HEK293 (cell line): ENCODE measurements at regions of chr16 and their contacts with region 1.

Region 1: DNA sequence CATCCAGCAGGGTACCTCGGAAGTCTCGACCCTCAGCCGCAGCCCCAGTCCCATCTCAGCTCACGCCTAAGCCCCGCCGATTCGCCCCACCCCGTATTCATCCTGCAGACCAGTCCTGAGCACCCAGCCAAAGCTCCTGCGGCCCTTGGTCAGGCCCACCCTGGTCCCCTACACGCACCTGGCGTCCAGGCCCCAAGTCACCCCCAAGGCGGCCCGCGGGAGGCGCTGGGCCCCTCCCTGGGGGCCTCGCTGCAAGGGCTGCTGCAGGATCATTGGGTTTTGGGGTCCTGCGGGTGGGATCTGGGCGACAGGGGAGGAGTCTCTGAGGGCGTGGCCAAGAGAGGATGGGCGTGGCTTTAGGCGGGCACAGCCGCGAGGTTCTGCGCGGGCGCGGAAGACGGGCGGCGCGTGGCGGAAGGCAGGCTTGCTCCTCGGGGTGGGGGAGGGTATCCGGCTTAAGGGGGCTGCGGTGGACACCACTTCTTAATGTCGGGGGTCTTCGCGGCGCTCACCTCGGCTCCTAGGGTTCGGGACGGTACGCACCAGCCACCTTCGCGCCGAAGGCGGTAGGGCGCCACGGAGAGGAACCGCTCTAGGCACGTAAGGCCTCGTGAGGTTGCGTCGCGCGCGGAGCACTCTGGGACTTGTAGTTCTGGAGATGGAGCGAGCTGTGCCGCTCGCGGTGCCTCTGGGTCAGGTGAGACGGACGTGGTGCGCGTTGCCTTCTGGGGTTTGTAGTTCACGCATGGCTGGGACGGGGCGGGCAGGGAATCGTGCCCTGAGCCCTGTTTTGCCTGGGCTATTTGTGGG is at the starts of genes HCFC1R1 and THOC6:
- H3K4me3 ChIP-seq: peak within 1 kb of the TSS; percentile 72
- H3K27ac ChIP-seq: peak within 1 kb of the TSS; percentile 85
- H3K4me1 ChIP-seq: peaks cover 27% of the 10 kb centered on the region
- CTCF ChIP-seq: no peak; the same call in 1 of the 2 replicates

Region 2: DNA sequence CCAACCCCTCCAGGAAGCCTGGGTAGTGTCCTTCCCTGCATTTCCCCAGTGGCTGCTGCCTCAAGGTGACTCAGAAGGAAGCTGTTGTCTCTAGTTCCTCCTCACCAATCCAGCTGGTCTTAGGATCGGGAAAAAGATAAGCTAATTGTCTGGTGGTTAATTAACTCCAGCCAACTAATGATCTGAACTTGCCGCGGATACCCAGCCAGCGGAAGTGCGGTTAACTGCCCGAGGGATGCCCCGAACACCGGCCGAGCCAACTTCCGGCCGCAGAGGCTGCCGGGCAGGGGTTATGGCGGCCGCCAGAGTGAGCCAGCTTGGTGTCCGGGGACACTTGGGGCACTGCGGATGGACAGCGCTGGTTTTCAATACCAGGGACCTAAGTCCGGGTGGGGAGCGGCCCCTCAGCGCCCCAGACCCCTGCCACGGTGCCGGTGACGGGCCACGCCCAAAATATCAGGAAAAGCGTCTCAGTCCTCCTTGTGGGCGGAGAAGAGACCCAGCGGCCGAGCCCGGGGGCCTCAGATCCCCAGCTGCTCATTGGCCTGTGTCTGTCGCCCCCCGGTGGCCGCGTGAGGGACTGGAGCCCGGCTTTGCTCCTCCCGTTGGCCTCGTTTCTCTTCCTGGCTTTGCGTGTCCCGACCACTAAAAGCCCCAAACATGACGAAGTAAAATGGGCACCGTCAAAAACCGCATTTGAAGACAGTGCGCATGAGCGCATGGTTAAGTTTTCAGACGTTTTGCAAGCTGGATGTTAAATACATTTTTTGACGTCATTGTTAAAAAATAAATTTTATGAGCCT is 155.7 kb before region 1 on chr16:
- CTCF ChIA-PET with region 1: no interaction called
- POLR2A ChIA-PET with region 1: no interaction called
- H3K4me3 ChIP-seq: peak overlapping the region; percentile 68
- H3K27ac ChIP-seq: peak overlapping the region; percentile 67
- H3K4me1 ChIP-seq: no peaks in the 10 kb centered on the region
- CTCF ChIP-seq: peak; percentile 97

Region 3: DNA sequence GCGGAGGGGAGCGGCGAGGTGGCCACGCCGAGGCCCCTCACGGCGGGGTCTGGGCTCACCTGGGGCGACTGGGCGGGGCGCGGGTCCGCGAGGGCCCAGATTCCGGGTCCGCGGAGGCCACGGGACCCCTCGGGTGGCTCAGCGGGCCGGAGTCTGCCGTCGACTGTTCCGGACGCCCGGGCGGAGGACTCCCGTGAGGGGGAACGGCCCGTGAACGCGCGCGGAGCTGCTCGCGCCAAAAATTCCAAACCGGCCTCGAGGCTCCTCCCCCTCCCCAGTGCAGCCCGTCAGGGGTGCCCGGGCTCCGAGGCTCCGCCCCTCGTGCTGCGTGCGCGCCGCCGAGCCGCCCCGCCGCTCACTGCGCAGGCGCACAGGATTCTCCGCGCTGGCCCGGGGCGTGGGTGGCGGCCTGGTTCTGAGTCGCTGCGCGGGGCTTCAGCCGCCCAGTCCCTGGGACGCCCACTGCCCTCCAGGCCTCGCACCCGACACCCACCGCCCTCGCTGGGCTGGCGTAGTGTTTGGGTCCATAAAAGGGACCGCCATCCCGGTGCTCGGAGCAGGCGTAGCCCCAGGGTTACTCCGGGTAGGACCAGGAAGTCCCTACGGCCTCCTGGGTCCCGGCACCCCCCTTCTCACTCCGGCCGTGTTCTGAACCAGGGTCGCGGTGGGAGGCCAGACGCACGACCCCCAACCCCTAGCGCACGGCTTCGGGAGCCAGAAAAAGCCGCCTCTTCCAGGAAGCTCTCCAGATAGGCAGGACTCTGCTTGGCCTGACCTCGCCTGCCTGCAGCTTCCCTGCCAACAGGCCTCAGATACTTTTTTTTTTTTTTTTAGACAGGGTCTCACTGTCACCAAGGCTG is 43.4 kb before region 1 on chr16 and contains the start of gene PKMYT1:
- CTCF ChIA-PET with region 1: interaction called, 3 read pairs
- POLR2A ChIA-PET with region 1: interaction called, 17 read pairs
- H3K4me3 ChIP-seq: peak within 1 kb of the TSS; percentile 84
- H3K27ac ChIP-seq: peak within 1 kb of the TSS; percentile 86
- H3K4me1 ChIP-seq: no peaks in the 10 kb centered on the region
- CTCF ChIP-seq: no peak

Region 4: GRCh38 chr16:3038256-3038655 is 14.4 kb after region 1 on chr16:
- CTCF ChIA-PET with region 1: interaction called, 87 read pairs
- POLR2A ChIA-PET with region 1: interaction called, 51 read pairs
- H3K4me3 ChIP-seq: no peak overlapping the region
- H3K27ac ChIP-seq: no peak overlapping the region
- H3K4me1 ChIP-seq: no peaks in the 10 kb centered on the region
- CTCF ChIP-seq: no peak

Region 5: GRCh38 chr16:3059000-3059722 is 35.3 kb after region 1 on chr16:
- CTCF ChIA-PET with region 1: interaction called, 14 read pairs
- POLR2A ChIA-PET with region 1: interaction called, 3 read pairs
- H3K4me3 ChIP-seq: peak overlapping the region; percentile 87
- H3K27ac ChIP-seq: peak overlapping the region; percentile 77; the same call in 1 of the 2 replicates
- H3K4me1 ChIP-seq: peaks cover 3% of the 10 kb centered on the region
- CTCF ChIP-seq: peak; percentile 99

Region 6: GRCh38 chr16:3076577-3076976 is 52.7 kb after region 1 on chr16:
- CTCF ChIA-PET with region 1: no interaction called
- POLR2A ChIA-PET with region 1: no interaction called
- H3K4me3 ChIP-seq: no peak overlapping the region
- H3K27ac ChIP-seq: no peak overlapping the region
- H3K4me1 ChIP-seq: no peaks in the 10 kb centered on the region
- CTCF ChIP-seq: no peak